Activated CD8-positive, alpha-beta T cell treated with anti-CD3 and anti-CD28 coated beads, Interleukin-2, amount 10 ng/mL, durations not matched to agents 7 days and 5 days (primary cell): ENCODE measurements at regions of chr6 and their contacts with region 1.

Region 1: DNA sequence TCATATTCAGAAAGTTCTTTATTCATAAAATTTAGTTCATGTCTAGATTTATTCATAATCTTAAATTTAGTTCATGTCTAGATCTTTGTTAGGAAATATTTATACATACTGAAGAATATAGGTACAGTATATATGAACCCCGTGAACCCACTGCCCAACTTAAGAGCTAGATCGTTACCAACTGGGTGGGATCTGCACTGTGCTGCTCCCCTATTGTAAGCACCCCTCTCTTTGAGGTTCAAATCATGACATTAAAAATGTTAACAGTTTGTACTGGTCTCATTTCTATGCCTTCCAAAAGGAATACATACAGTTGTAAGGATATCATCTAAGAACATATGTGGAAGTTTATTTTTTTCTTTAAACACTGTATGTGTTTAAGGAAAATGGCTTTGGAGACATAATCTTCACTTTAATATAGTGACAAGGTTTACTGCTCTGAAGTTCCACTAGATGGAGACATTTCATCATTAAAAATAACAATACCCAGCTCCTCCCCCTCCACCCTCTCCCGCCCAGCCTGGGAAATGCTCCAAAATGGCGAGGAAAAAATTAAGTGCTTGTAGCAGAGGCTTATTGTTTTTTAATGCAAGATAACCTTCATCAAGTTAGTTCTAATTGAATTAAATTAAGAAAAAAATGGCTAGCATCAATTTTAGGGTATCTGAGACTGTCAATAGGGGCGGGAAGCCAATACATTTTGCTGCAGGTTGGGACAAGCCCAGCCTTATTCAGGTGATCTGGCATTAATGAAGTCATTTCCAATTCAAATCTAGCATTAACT is 104.1 kb upstream of the TRAF3IP2 start:
- DNase-seq: peak; percentile 72
- ATAC-seq: peak; percentile 87
- H3K4me3 Mint-ChIP-seq: no peak overlapping the region
- H3K27ac Mint-ChIP-seq: peak overlapping the region; percentile 10
- H3K4me1 Mint-ChIP-seq: peaks cover 34% of the 10 kb centered on the region
- H3K27me3 Mint-ChIP-seq: no peaks in the 10 kb centered on the region

Region 2: DNA sequence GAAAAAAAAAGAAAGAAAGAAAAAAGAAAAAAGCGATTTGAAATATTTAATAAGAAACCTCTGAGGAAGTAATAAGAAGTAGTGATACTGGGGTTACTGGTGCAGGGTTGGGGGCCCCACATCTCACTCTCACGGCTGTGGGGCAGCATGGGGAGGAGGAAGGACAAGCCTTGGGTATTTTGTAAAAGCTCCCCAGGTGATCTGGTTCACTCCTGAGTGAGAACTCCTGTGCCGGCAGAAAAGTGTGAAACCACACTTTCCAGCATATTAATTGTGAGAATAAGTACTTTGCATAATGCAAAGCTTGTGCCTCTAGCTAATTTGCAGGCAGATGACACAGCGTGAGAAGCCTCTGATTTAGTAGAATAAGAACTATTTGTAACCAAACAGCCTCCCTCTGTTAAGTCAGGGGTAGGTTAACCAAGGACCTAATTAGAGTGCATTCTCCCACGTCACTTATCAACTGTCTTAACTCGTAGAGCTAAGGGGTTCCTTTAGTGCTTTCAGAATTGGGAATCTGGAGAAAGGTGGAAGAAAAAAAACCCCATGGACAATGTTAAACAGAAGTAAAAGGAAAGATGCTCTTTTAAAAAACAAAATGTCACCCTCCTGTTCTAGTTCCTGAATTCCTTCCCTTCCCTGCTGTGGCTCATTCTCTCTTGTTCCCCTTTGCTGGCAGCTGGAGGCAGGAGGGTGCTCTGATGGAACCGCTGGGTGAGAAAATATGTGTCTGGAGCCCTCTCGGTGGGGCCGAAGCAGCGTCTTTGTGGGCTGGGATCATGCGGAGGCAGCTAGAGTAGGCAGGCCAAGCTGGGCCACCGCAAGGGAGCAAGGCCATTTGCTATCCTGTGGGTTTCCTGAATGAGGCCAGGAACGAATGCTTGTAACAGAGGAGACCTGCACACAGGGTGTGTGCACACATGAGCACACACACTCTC is 54.7 kb after region 1 on chr6:
- CTCF ChIA-PET with region 1: interaction called, 12 read pairs
- POLR2A ChIA-PET with region 1: no interaction called
- DNase-seq: peak; percentile 58
- ATAC-seq: peak; percentile 37
- H3K4me3 Mint-ChIP-seq: peak overlapping the region; percentile 63
- H3K27ac Mint-ChIP-seq: peak overlapping the region; percentile 90
- H3K4me1 Mint-ChIP-seq: peaks cover 98% of the 10 kb centered on the region
- H3K27me3 Mint-ChIP-seq: no peaks in the 10 kb centered on the region

Region 3: GRCh38 chr6:111841822-111842221 is 132.0 kb after region 1 on chr6:
- CTCF ChIA-PET with region 1: interaction called, 18 read pairs
- POLR2A ChIA-PET with region 1: no interaction called
- DNase-seq: peak; percentile 77
- ATAC-seq: peak; percentile 2
- H3K4me3 Mint-ChIP-seq: no peak overlapping the region
- H3K27ac Mint-ChIP-seq: no peak overlapping the region
- H3K4me1 Mint-ChIP-seq: no peaks in the 10 kb centered on the region
- H3K27me3 Mint-ChIP-seq: no peaks in the 10 kb centered on the region

Region 4: DNA sequence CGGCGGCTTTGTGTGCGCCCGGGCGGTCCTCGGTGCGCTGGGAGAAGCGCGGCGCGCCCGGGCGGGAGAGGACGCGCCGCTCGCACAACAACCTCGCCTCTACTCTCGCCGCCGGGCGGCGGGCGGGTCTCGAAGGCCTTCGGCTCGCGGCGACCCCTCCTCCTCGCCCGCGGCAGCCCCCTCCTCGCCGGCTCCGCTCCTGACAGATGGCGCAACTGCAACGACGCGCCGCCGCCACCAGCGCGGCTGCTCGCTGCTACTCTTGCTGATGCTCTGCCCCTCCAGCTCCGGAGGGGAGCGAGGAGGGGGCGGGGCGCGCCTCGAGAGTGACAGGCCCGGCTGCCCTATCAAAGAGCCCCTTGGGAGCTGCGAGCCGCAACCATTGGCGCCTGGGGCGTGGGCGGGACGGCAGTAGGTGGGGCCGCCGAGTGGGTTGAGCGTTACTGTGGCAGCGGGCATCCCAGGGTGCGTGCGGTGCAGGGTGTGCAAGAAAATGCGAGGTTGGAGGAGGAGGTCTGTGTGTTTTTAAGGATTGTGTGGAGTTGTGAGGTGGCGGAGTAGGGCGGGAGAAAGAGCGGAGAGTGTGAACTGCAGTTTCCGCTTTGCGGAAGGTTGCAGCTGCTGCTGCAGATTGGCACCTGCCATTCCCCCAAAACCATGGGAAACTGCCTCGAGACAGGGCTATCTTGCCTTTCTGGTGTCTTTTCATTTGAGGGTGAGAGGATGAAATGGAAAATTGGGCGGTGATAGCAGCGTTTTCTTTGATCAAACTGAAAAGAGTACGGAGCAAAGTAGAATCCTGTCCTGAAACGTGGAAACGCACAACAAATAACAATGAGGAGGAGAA is 163.6 kb after region 1 on chr6 and contains the start of gene FYN:
- CTCF ChIA-PET with region 1: interaction called, 10 read pairs
- POLR2A ChIA-PET with region 1: interaction called, 3 read pairs
- DNase-seq: peak; percentile 99
- ATAC-seq: peak; percentile 86
- H3K4me3 Mint-ChIP-seq: peak within 1 kb of the TSS; percentile 94
- H3K27ac Mint-ChIP-seq: peak within 1 kb of the TSS; percentile 95
- H3K4me1 Mint-ChIP-seq: peaks cover 37% of the 10 kb centered on the region
- H3K27me3 Mint-ChIP-seq: no peaks in the 10 kb centered on the region
- total RNA-seq, gene FYN: 148 to 154 TPM

Region 5: GRCh38 chr6:111918825-111919224 is 209.0 kb after region 1 on chr6:
- CTCF ChIA-PET with region 1: no interaction called
- POLR2A ChIA-PET with region 1: no interaction called
- DNase-seq: no peak
- ATAC-seq: no peak
- H3K4me3 Mint-ChIP-seq: no peak overlapping the region
- H3K27ac Mint-ChIP-seq: no peak overlapping the region
- H3K4me1 Mint-ChIP-seq: peaks cover 16% of the 10 kb centered on the region
- H3K27me3 Mint-ChIP-seq: no peaks in the 10 kb centered on the region

Region 6: GRCh38 chr6:112010328-112010727 is 300.5 kb after region 1 on chr6:
- CTCF ChIA-PET with region 1: interaction called, 13 read pairs
- POLR2A ChIA-PET with region 1: no interaction called
- DNase-seq: no peak
- ATAC-seq: peak; percentile 47
- H3K4me3 Mint-ChIP-seq: no peak overlapping the region
- H3K27ac Mint-ChIP-seq: no peak overlapping the region
- H3K4me1 Mint-ChIP-seq: no peaks in the 10 kb centered on the region
- H3K27me3 Mint-ChIP-seq: no peaks in the 10 kb centered on the region